ENCODE measurements at regions of chr17 and their contacts with region 1.

Region 1: DNA sequence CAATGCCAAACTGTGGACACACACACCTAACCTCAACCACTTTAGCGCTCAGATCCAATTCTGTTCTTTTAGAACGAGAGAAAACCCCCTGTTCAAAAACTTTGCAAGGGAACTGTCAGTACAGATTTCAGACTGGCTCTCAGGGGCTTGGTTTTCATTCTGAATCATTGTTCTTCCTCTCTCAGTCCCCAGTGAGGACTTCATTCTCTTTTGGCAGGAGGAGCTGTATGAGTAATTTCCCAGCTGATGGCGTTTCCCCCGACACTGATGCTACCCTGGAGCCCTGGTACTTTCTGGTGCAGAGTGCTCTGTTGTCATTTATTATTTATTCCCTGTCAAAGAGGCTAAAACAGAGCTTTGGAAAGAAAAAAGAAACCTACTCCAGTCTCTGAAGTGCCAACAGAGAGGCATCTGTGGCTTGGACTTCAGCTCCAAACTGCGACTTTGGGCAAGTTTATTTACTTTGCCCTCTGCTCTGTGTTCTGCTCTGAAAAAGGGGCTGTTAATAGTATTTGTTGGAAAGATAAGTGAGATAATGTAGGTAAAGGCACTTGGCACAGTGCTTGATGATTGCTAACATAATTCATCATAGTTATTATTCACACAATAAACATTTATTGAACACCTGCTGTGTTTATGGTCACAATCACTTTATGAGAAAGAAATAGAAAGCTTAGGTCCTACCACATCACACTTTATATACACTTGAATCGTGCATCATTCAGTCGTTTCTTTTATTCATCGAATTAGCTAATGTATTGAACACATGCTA is 28.3 kb downstream of the ETV4 start:
- DNase-seq: no peak
- H3K4me3 ChIP-seq: no peak overlapping the region
- CTCF ChIP-seq: no peak

Region 2: DNA sequence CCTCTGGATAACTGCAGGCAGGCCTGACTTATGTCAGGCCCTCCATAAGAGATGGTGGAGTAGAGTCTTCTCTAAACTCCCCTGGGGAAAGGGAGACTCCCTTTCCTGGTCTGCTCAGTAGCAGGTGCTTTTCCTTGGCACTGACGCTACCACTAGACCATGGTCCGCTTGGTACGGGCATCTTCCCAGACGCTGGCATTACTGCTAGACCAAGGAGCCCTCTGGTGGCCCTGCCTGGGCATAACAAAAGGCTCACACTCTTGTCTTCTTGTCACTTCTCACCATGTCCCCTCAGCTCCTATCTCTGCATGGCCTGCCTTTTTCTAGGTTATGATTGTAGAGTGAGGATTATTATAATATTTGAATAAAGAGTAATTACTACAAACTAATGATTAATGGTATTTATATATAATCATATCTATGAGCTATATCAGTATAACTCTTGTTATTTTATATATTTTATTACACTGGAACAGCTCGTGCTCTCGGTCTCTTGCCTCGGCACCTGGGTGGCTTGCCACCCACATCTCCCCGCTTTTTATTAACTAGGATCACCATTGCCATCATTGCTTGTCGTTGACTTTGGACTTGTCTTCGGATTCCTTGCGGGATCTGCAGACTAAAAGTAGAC is 178.8 kb before region 1 on chr17:
- CTCF ChIA-PET with region 1: no interaction called
- POLR2A ChIA-PET with region 1: no interaction called
- DNase-seq: no peak
- H3K4me3 ChIP-seq: no peak overlapping the region
- CTCF ChIP-seq: peak; percentile 78

Region 3: GRCh38 chr17:43530278-43531081 is 12.7 kb after region 1 on chr17:
- CTCF ChIA-PET with region 1: interaction called, 39 read pairs
- POLR2A ChIA-PET with region 1: no interaction called
- DNase-seq: no peak
- H3K4me3 ChIP-seq: peak overlapping the region; percentile 28
- CTCF ChIP-seq: no peak

Region 4: GRCh38 chr17:43536236-43536992 is 18.6 kb after region 1 on chr17:
- CTCF ChIA-PET with region 1: interaction called, 39 read pairs
- POLR2A ChIA-PET with region 1: no interaction called
- DNase-seq: no peak
- H3K4me3 ChIP-seq: no peak overlapping the region
- CTCF ChIP-seq: no peak

Measured in AG04449 (cell line).